ENCODE measurements at regions of chr17 and their contacts with region 1.

Region 1: DNA sequence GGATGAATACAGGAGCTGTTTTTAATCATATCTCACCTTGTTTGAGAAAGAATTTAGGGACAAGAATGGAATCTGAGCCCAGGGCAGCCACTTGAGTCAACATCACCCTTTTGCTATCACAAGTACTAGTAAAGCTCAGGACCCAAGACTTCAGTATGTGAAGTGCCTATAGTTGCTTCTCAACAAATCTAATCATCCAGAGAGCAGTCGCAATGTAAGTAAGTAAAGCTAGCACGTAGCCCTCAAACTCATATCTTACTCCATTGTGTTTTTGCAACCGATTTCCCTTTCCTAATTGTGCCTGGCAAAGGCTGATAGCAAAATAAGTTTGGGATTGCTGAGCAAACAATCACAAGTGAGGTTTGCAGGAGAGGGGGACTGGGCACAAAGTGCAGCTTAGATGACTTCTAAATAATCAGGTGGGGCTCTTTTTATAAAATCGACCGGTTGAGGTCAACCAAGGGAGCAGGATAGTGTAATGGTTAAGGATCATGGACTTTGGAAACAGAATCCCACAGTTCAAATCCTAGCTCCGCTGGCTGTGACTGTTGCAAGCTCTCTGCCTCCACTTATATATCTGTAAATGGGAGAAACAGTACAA is 13.0 kb downstream of the TOB1 start:
- DNase-seq: no peak
- ATAC-seq: peak in 1 of 4 donors; percentile 18
- H3K4me3 ChIP-seq: peak overlapping the region in 1 of 12 donors; percentile 0
- H3K27ac ChIP-seq: peak overlapping the region in 11 of 12 donors; percentile 25 to 93 (median 83)
- H3K4me1 ChIP-seq: peaks cover 0 to 38% (median 15%) of the 10 kb centered on the region in 12 donors
- H3K27me3 ChIP-seq: no peaks in the 10 kb centered on the region
- CTCF ChIP-seq: no peak
- POLR2A ChIP-seq: no peak

Region 2: DNA sequence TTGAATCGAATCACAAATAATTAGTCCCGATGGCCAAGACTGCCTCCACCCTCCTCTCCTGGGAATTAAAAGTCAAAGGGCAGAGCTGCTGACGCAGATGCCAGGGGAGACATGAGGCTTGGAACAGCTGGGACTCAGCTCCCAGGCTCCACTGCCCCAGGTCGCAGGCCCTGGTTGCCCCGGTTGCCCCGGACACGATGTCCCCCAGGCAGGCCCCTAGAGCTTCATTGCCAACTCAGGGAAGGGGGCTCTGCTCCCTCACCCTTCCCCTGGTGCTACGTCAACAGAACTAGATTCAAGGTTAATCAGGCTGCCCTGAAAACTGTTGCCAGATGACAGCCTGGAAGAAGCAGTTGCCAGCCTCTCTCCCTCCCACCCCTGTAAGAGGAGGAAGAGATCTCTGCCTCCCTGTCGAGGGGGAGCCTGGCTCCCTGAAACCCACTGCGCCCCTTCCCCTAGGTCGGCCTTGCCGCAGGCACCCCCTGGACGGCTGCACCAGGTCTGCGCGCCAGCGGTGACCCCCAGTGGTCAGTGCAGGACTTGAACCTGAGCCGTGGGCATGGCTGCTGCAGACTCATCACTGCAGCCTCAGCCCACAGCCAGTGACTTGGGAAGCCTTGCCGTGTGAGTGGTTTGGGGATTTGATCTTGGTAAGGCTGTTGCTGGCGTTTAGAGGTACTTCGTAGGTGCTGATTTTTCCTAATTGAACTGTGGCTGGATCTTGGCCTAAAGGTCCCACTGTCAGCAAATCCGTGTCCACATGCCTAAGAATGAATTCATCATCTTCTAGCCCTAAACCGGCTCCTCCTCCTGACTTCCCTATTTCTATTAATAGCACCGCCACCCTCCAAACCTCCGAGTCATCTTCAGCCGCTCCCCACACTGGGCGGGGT is 97.1 kb after region 1 on chr17:
- intact Hi-C with region 1: loop called (anchors 1 to 5 kb)
- DNase-seq: peak; percentile 77 to 90 (median 86)
- ATAC-seq: peak; percentile 78 to 88 (median 86)
- H3K4me3 ChIP-seq: peak overlapping the region in 3 of 12 donors; percentile 0 to 16 (median 2)
- H3K27ac ChIP-seq: peak overlapping the region; percentile 71 to 91 (median 82)
- H3K4me1 ChIP-seq: peaks cover 0 to 67% (median 46%) of the 10 kb centered on the region in 12 donors
- H3K27me3 ChIP-seq: no peaks in the 10 kb centered on the region
- CTCF ChIP-seq: peak; percentile 62 to 87 (median 81)
- POLR2A ChIP-seq: no peak

Region 3: GRCh38 chr17:50956750-50957523 is 103.8 kb after region 1 on chr17:
- intact Hi-C with region 1: loop called in 2 of 10 experiments (anchors 5 kb)
- DNase-seq: peak; percentile 59 to 83 (median 62)
- ATAC-seq: peak; percentile 52 to 76 (median 72)
- H3K4me3 ChIP-seq: no peak overlapping the region
- H3K27ac ChIP-seq: peak overlapping the region in 4 of 12 donors; percentile 51 to 78 (median 70)
- H3K4me1 ChIP-seq: peaks cover 0 to 42% (median 28%) of the 10 kb centered on the region in 12 donors
- H3K27me3 ChIP-seq: no peaks in the 10 kb centered on the region
- CTCF ChIP-seq: peak; percentile 56 to 81 (median 72)
- POLR2A ChIP-seq: no peak

Region 4: DNA sequence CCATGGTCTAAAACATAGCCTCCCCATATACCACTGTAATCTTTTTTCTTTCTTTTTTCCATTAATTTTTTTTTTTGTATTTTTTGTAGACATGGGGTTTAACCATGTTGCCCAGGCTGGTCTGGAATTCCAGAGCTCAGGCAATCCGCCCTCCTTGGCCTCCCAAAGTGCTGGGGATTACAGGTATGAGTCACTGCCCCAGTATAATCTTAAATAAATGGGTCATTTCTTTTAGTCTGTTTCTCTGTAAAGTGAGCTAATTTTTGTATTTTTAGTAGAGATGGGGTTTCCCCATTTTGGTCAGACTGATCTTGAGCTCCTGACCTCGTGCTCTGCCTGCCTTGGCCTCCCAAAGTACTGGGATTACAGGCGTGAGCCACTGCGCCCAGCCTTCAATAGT is 294.5 kb after region 1 on chr17:
- intact Hi-C with region 1: loop called in 2 of 10 experiments (anchors 10 kb)
- DNase-seq: no peak
- ATAC-seq: no peak
- H3K4me3 ChIP-seq: no peak overlapping the region
- H3K27ac ChIP-seq: no peak overlapping the region
- H3K4me1 ChIP-seq: peaks cover 0 to 5% (median 2%) of the 10 kb centered on the region in 12 donors
- H3K27me3 ChIP-seq: no peaks in the 10 kb centered on the region
- CTCF ChIP-seq: no peak
- POLR2A ChIP-seq: no peak